ENCODE measurements at regions of chr6 and their contacts with region 1.

Region 1: DNA sequence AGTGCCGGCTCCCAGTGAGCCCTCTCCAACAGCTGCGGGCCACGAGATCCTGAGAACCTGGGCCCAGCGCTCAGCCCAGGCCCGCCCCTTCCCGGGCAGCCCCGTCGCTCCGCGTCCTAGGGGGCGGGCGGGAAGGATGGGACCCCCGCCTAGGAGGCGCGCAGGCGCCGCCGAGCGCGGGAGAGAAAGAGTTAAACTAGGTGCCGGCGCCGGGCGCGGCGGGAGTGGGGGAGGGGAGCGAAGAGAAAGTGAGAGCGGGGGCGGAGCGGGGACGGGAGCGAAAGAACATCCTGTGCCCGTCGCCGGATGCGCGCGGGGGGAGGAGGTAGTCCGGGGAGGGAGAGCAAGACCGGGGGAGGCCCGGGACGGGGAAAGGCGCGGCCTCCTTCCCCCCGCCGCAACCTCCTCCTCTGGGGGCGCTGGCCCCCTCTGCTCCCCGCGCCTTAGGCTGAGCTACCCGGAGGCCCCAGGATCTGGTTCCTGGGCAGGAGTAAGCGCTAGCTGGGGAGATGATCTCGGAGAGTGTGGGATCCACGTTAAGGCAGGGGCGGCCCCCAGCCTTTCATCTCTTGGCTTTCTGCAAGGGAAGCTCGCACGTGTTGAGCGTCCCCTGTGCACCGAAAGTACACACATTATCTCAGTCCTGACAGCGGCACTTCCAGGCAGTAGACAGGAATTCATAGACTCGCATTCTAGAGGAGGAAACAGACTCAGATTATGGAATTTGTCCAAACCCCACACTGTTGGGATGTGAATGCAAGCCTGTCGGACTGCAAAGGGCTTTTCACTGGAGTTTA is 4.9 kb upstream of the ARMC12 start:
- DNase-seq: peak; percentile 29
- H3K4me3 ChIP-seq: peak overlapping the region; percentile 65
- CTCF ChIP-seq: no peak

Region 2: GRCh38 chr6:35522660-35523658 is 209.0 kb before region 1 on chr6:
- CTCF ChIA-PET with region 1: interaction called, 180 read pairs
- POLR2A ChIA-PET with region 1: no interaction called
- DNase-seq: no peak
- H3K4me3 ChIP-seq: no peak overlapping the region
- CTCF ChIP-seq: peak; percentile 95

Region 3: DNA sequence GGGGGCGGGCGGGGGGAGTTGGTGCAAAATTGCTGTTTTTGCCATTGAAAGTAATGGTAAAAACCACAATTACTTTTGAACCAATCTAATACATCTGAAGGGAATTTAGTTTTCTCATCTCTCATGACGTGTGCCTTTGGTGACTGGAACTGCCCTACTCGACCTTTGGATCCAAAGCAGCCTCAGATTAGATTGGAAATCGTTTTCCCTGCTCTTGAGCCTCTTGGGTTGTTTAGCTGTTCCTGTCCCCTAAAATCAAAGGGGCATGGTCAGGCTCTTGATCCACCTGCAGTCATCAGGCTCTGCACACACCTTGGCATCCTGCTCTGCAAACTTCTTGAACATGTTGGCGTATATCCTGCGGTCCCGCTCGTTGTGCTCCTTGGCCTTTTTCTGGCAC is 155.3 kb before region 1 on chr6:
- CTCF ChIA-PET with region 1: interaction called, 524 read pairs
- POLR2A ChIA-PET with region 1: interaction called, 4 read pairs
- DNase-seq: no peak
- H3K4me3 ChIP-seq: no peak overlapping the region
- CTCF ChIP-seq: no peak

Region 4: DNA sequence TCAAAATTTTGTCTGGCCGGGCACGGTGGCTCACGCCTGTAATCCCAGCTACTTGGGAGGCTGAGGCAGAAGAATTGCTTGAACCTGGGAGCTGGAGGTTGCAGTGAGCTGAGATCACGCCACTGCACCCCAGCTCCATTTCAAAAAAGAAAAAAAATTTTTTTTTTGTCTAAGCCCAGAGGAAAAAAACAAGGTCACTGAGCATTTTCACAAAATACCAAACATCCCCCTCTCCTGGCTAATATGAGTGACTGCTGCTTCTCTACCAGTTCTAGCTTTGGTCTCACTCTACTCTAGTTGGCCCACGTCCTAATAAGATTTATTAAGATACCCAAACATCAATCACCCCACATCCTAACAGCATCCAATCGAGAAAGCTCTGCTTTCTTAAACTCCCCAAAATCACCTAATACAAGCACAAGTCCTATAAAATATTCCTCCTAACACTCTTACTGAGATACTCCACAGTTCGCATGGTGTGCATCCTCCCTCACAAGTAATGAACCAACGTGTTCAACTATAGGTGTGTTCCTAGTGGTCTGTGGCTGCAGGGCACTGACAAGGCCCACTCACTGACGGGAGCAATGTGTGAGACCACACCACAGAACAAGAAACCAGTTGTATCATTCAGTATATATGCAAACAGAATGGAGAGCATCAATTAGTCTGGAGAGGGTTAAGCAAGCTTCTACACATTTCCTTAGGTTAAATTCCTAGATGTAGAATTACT is 107.4 kb before region 1 on chr6:
- CTCF ChIA-PET with region 1: interaction called, 10 read pairs
- POLR2A ChIA-PET with region 1: no interaction called
- DNase-seq: no peak
- H3K4me3 ChIP-seq: no peak overlapping the region
- CTCF ChIP-seq: peak; percentile 46

Region 5: DNA sequence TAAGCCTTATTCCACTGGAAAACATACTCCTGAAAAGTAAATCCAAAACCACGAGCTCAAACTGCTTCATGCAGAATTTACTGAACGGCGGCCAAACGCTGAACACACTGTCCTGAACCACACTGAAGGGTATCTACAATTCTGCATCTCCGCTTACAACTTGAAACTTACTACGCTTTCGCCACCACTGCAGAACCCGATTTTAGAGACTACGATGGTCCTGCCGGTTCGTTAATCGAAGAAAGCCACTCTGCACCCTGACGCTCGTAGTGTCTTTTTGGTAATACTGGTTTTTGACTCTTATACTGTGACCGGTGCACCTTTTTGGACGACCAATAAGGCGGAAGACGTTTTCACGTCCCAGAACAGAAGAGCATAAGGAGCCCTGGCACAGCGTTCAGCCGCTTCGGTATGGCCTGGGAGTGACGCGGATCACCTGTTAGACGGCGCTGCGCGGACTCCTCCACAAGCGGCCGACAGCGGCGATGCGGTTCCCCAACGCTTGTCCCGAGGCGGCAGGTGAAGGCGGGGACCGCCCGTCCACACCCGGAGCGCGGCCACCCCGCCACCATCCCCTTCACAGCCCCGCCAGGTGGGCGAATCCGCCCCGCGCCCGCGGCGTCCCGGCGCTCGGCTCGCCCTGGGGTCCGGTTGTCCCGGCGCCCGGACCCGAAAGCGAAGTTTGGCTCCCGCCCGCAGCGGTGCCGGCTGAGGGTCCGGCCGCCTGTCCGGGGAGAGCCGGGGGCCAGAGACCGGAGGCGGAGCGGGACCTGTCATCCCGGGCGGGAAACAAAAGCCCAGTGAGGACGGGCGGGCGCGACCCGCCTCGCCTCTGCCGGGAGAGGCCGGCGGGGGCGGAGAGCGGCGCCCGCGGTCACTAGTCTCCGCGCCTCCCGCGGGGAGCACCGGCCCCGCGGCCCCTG is 44.0 kb before region 1 on chr6:
- CTCF ChIA-PET with region 1: interaction called, 16 read pairs
- POLR2A ChIA-PET with region 1: no interaction called
- DNase-seq: no peak
- H3K4me3 ChIP-seq: peak overlapping the region; percentile 70
- CTCF ChIP-seq: no peak

Region 6: GRCh38 chr6:35786810-35787209 is 54.9 kb after region 1 on chr6:
- CTCF ChIA-PET with region 1: interaction called, 18 read pairs
- POLR2A ChIA-PET with region 1: no interaction called
- DNase-seq: no peak
- H3K4me3 ChIP-seq: no peak overlapping the region
- CTCF ChIP-seq: no peak

Region 7: DNA sequence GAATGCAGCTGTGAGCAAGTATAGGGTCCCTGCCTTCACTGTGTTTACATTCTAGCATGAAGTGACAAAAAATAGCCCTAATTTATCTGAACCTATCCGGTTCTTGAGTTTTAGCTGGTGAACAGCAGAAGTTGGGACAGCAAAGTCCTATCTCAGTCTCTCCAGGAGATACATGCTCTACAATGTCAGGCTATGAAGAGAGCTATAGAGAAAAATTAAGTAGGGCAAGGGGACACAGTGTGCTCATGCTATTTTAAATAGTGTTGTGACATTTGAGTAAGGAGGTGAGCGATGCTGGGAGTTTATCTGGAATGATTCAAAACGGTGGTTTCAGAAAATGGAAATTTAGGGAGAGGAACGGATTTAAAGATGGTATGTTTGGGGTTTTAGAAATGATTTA is 168.5 kb after region 1 on chr6:
- CTCF ChIA-PET with region 1: no interaction called
- POLR2A ChIA-PET with region 1: no interaction called
- DNase-seq: no peak
- H3K4me3 ChIP-seq: no peak overlapping the region
- CTCF ChIP-seq: no peak